Esophagus muscularis mucosa (tissue), 4 donors: ENCODE measurements at regions of chr17 and their contacts with region 1.

Region 1: DNA sequence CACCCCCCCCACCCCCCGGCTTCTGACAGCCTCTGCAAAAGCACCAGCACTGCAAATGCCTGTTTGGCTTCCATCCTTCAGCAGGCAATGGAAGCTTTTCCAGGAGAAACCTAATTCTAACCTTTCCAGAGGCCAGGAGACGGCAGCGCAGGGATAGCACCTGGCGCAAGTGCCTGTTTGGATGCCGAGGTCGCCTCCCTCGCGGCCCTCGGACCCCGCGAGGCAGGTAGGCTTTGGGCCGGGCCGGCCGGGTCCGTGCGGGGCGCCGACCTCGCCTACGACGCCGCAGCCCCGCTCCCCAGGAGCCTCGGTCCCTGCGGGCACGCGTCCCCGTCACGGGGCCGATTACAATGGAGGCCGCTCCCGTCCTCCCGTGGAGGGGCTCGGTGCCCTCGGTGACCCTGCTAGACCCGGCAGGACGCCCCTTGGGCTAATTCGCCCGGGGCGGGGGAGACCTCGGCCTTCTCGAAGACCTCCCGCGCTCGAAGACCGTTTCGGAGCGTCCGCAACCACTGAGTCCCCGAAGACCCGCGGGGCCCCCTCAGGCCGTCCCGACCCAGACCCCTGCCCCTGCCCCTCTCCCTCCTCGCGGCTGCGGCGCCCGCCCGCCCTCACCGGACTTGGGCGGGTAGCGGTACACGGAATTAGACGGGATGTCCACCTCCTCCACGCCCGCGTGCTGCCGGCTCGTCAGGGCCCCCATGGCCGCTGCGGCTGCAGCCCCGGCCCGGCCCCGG is 587 bp downstream of the RNF157 start:
- DNase-seq: no peak
- H3K4me3 ChIP-seq: peak overlapping the region; percentile 58 to 73 (median 65)
- H3K27ac ChIP-seq: peak overlapping the region in 3 of 4 donors; percentile 63 to 67 (median 64)
- H3K4me1 ChIP-seq: peaks cover 16 to 27% (median 22%) of the 10 kb centered on the region in 4 donors
- H3K27me3 ChIP-seq: peaks cover 0 to 46% (median 6%) of the 10 kb centered on the region in 4 donors
- CTCF ChIP-seq: no peak
- EP300 ChIP-seq: no peak
- POLR2A ChIP-seq: no peak

Region 2: DNA sequence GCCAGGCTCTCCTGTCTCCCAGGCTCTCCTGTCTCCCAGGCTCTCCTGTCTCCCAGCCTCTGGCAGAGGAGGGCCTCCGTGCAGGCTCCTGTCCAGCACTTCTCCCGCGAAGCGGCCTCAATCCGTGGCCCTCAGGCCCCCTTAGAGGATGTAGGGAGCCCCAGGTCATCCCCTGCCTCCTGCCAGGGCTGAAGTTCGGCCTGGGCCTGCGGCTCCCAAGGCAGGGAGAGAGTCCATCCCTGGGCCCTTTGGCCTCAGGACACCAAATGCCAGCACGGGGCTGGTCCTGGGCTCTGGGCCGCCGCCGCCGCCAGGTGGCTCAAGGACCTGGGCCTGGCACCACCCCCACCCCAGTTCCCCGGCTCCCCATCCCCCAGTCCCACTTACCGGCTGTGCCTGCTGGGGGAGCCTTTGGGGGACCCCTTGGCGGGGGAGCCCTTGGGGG is 213.0 kb before region 1 on chr17:
- intact Hi-C with region 1: no loop called
- DNase-seq: no peak
- H3K4me3 ChIP-seq: no peak overlapping the region
- H3K27ac ChIP-seq: no peak overlapping the region
- H3K4me1 ChIP-seq: peaks cover 0 to 4% (median 0%) of the 10 kb centered on the region in 4 donors
- H3K27me3 ChIP-seq: peaks cover 0 to 10% (median 0%) of the 10 kb centered on the region in 4 donors
- CTCF ChIP-seq: no peak
- EP300 ChIP-seq: no peak
- POLR2A ChIP-seq: no peak

Region 3: DNA sequence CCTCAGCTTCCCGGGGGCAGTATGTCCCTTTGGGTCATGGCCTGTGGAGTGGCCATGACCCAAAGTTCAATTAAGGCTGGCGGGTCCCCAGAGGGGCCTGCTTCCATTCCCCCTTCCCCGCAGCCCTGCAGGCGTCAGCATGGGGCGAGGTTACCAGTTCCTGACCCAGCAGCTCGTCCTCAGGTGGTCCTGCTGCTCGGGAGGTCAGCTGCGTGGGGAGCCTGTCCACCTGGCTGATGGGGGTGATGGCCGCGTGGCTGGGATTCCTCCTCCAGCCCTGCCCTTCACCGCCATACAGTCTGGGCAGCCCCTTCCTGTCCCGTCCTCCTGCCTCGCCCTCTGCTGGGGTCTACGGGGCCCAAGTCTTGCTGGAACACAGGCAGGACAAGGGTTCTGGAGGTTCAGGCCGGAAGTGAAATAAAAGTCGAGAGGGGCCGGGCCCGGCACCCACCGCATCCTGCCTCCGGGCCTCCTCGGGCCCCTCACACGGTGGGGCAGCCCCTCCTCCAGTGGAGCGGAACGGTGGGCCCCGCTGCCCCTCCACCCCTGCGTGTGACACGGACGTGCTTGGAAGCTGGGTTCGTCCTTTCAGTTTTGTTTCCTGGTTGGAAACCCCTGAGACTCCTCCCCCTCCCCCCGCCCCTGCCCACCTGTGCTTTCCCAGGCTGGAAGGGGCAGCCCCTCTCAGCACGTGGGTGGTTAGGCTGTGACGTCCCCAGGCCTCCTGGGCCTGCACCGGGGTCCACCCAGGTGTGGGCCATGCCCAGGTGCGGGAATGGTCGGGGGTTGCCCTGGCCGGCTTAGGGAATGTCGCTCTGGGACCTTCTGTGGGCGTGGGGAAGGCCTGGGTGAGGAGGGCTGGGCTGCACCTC is 32.2 kb after region 1 on chr17:
- intact Hi-C with region 1: loop called (anchors 5 kb)
- DNase-seq: no peak
- H3K4me3 ChIP-seq: peak overlapping the region; percentile 20 to 55 (median 34)
- H3K27ac ChIP-seq: peak overlapping the region; percentile 42 to 62 (median 50)
- H3K4me1 ChIP-seq: peaks cover 56 to 74% (median 68%) of the 10 kb centered on the region in 4 donors
- H3K27me3 ChIP-seq: no peaks in the 10 kb centered on the region
- CTCF ChIP-seq: no peak
- EP300 ChIP-seq: no peak
- POLR2A ChIP-seq: no peak

Region 4: GRCh38 chr17:76852843-76853242 is 613.1 kb after region 1 on chr17:
- intact Hi-C with region 1: no loop called
- DNase-seq: no peak
- H3K4me3 ChIP-seq: no peak overlapping the region
- H3K27ac ChIP-seq: no peak overlapping the region
- H3K4me1 ChIP-seq: no peaks in the 10 kb centered on the region
- H3K27me3 ChIP-seq: peaks cover 0 to 68% (median 0%) of the 10 kb centered on the region in 4 donors
- CTCF ChIP-seq: no peak
- EP300 ChIP-seq: no peak
- POLR2A ChIP-seq: no peak